ENCODE measurements at regions of chr19 and their contacts with region 1.

Region 1: DNA sequence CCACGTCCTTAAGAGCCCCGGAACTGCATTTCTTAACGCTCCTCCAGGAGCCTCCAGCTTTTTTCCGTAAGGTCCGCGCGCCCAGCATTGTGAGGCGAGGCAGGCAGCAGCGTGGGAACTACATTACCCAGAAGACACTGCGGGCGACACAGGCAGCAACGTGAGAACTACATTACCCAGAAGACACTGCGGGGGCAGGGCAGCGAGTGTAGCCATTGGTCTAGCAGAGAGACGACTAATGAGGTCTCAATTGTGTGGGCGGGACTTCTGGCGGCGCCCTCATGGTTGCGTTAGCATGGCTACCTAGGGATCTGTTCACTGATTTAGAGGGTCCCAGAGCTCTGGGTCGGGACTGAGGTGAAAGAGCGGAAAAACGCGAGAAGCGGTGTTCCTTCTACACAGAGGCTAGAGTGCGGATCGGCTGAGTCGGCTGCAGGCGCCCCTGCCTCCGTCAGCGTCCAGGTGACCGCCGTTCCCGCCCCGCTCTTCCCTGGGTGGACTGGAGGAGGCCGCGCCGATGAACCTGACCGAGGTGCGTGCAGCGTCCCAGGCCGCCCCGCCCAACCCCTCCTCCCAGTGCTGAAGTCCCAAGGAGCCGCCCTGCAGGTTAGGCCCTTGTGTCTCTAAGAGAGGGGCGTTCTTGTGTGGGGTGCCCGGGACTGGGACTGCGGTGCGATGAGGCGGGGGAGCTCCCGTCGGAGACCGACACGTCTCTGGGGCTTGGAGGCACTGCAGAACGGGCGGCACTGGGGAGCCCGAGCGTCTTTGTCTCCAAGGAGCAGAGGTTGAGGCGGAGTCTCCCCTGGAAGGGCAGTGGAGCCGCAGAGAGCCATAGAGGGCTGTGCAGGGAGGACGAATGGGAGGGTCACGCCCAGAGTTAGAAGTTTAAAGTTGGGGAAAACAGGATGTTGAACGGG is at the start of gene ZNF749:
- DNase-seq: peak; percentile 95 to 99 (median 97)
- H3K4me3 ChIP-seq: peak within 1 kb of the TSS; percentile 62 to 70
- H3K4me3 Mint-ChIP-seq: peak within 1 kb of the TSS; percentile 96 to 100 (median 98)
- H3K27ac ChIP-seq: peak within 1 kb of the TSS; percentile 66
- H3K27ac Mint-ChIP-seq: peak within 1 kb of the TSS; percentile 83 to 99 (median 97)
- H3K4me1 ChIP-seq: peaks cover 13% of the 10 kb centered on the region
- H3K4me1 Mint-ChIP-seq: peaks cover 22 to 36% (median 28%) of the 10 kb centered on the region in 4 donors
- H3K27me3 ChIP-seq: no peaks in the 10 kb centered on the region
- H3K27me3 Mint-ChIP-seq: peaks cover 0 to 2% of the 10 kb centered on the region in 2 donors
- total RNA-seq, gene ZNF749: 14.8 to 15.2 TPM

Region 2: GRCh38 chr19:57362997-57363705 is 72.2 kb before region 1 on chr19 and contains the starts of genes TRAPPC2B and ZNF547:
- CTCF ChIA-PET with region 1: no interaction called
- POLR2A ChIA-PET with region 1: no interaction called
- intact Hi-C with region 1: loop called (anchors 1 kb)
- DNase-seq: peak; percentile 97 to 99 (median 99)
- H3K4me3 ChIP-seq: peak within 1 kb of the TSS; percentile 51 to 70
- H3K4me3 Mint-ChIP-seq: peak within 1 kb of the TSS; percentile 92 to 97 (median 94)
- H3K27ac ChIP-seq: peak within 1 kb of the TSS; percentile 76
- H3K27ac Mint-ChIP-seq: peak within 1 kb of the TSS; percentile 97 to 99 (median 99)
- H3K4me1 ChIP-seq: peaks cover 12% of the 10 kb centered on the region
- H3K4me1 Mint-ChIP-seq: peaks cover 12 to 18% (median 16%) of the 10 kb centered on the region in 4 donors
- H3K27me3 ChIP-seq: no peaks in the 10 kb centered on the region
- H3K27me3 Mint-ChIP-seq: peaks cover 0 to 2% of the 10 kb centered on the region in 2 donors
- total RNA-seq, gene TRAPPC2B: 11.0 to 12.1 TPM
- total RNA-seq, gene ZNF547: 6.5 to 10.8 TPM

Region 3: GRCh38 chr19:57410877-57411671 is 24.2 kb before region 1 on chr19 and contains the start of gene ZNF17:
- CTCF ChIA-PET with region 1: interaction called, 3 read pairs
- POLR2A ChIA-PET with region 1: interaction called, 5 read pairs
- intact Hi-C with region 1: loop called (anchors 1 kb)
- DNase-seq: peak; percentile 85 to 95 (median 90)
- H3K4me3 ChIP-seq: peak within 1 kb of the TSS; percentile 49 to 90
- H3K4me3 Mint-ChIP-seq: peak within 1 kb of the TSS; percentile 92 to 97 (median 96)
- H3K27ac ChIP-seq: peak within 1 kb of the TSS; percentile 73
- H3K27ac Mint-ChIP-seq: peak within 1 kb of the TSS; percentile 79 to 95 (median 94)
- H3K4me1 ChIP-seq: peaks cover 16% of the 10 kb centered on the region
- H3K4me1 Mint-ChIP-seq: peaks cover 23 to 42% (median 29%) of the 10 kb centered on the region in 4 donors
- H3K27me3 ChIP-seq: no peaks in the 10 kb centered on the region
- H3K27me3 Mint-ChIP-seq: no peaks in the 10 kb centered on the region
- total RNA-seq, gene ZNF17: 28.3 to 29.9 TPM

Region 4: GRCh38 chr19:57515234-57515633 is 79.9 kb after region 1 on chr19:
- CTCF ChIA-PET with region 1: no interaction called
- POLR2A ChIA-PET with region 1: no interaction called
- intact Hi-C with region 1: no loop called
- DNase-seq: no peak
- H3K4me3 ChIP-seq: no peak overlapping the region
- H3K4me3 Mint-ChIP-seq: no peak overlapping the region
- H3K27ac ChIP-seq: no peak overlapping the region
- H3K27ac Mint-ChIP-seq: no peak overlapping the region
- H3K4me1 ChIP-seq: no peaks in the 10 kb centered on the region
- H3K4me1 Mint-ChIP-seq: no peaks in the 10 kb centered on the region
- H3K27me3 ChIP-seq: no peaks in the 10 kb centered on the region
- H3K27me3 Mint-ChIP-seq: no peaks in the 10 kb centered on the region

Region 5: GRCh38 chr19:57527136-57527881 is 92.0 kb after region 1 on chr19 and contains the start of gene ZNF549:
- CTCF ChIA-PET with region 1: no interaction called
- POLR2A ChIA-PET with region 1: no interaction called
- intact Hi-C with region 1: loop called (anchors 1 kb)
- DNase-seq: peak; percentile 88 to 93 (median 90)
- H3K4me3 ChIP-seq: peak within 1 kb of the TSS; percentile 15 to 99
- H3K4me3 Mint-ChIP-seq: peak within 1 kb of the TSS; percentile 86 to 98 (median 92)
- H3K27ac ChIP-seq: peak within 1 kb of the TSS; percentile 79
- H3K27ac Mint-ChIP-seq: peak within 1 kb of the TSS; percentile 86 to 97 (median 92)
- H3K4me1 ChIP-seq: peaks cover 16% of the 10 kb centered on the region
- H3K4me1 Mint-ChIP-seq: peaks cover 16 to 31% (median 22%) of the 10 kb centered on the region in 4 donors
- H3K27me3 ChIP-seq: no peaks in the 10 kb centered on the region
- H3K27me3 Mint-ChIP-seq: peaks cover 0 to 4% of the 10 kb centered on the region in 2 donors
- total RNA-seq, gene ZNF549: 20.5 to 21.8 TPM

Region 6: DNA sequence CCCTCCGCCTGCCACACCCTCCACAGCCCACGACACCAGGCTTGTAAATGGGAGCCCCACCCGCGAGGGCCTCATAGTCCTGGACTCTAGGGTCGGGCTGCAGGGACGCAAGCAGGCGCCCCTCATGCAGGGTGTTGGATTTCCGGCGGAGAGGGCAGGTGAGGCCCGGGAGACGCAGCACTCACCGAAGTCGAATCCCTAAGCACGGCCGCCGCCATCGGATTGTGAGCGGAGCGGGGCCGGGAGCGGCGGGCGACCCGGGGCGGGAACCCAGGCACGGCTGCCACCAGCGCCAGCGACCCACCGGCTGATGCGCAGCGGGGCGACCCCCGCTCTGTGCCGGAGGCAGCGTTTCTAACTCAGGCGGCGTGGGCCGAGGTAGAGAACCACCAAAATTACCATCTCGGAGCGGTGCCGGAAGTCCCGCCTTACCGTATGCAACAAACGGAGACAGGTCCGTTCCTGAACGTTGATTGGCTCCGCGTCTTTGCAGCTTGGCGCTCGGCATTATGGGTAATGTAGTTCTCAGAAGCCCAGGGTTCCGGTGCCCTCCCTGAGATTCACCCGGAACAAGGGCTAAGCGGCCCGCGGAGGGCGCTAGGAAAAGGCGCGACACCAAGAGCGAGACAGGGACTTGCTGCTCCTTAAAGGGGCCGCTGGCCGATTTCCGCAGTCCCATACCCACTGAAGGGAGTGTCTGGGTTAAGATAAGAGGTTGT is 143.3 kb after region 1 on chr19 and contains the start of gene ZNF416:
- CTCF ChIA-PET with region 1: no interaction called
- POLR2A ChIA-PET with region 1: no interaction called
- intact Hi-C with region 1: loop called (anchors 1 kb)
- DNase-seq: peak; percentile 94 to 98 (median 97)
- H3K4me3 ChIP-seq: peak within 1 kb of the TSS; percentile 53 to 73
- H3K4me3 Mint-ChIP-seq: peak within 1 kb of the TSS; percentile 84 to 88 (median 88)
- H3K27ac ChIP-seq: peak within 1 kb of the TSS; percentile 68
- H3K27ac Mint-ChIP-seq: peak within 1 kb of the TSS; percentile 78 to 92 (median 86)
- H3K4me1 ChIP-seq: peaks cover 24% of the 10 kb centered on the region
- H3K4me1 Mint-ChIP-seq: peaks cover 17 to 36% (median 20%) of the 10 kb centered on the region in 4 donors
- H3K27me3 ChIP-seq: no peaks in the 10 kb centered on the region
- H3K27me3 Mint-ChIP-seq: no peaks in the 10 kb centered on the region
- total RNA-seq, gene ZNF416: 12.0 to 13.9 TPM

Region 7: DNA sequence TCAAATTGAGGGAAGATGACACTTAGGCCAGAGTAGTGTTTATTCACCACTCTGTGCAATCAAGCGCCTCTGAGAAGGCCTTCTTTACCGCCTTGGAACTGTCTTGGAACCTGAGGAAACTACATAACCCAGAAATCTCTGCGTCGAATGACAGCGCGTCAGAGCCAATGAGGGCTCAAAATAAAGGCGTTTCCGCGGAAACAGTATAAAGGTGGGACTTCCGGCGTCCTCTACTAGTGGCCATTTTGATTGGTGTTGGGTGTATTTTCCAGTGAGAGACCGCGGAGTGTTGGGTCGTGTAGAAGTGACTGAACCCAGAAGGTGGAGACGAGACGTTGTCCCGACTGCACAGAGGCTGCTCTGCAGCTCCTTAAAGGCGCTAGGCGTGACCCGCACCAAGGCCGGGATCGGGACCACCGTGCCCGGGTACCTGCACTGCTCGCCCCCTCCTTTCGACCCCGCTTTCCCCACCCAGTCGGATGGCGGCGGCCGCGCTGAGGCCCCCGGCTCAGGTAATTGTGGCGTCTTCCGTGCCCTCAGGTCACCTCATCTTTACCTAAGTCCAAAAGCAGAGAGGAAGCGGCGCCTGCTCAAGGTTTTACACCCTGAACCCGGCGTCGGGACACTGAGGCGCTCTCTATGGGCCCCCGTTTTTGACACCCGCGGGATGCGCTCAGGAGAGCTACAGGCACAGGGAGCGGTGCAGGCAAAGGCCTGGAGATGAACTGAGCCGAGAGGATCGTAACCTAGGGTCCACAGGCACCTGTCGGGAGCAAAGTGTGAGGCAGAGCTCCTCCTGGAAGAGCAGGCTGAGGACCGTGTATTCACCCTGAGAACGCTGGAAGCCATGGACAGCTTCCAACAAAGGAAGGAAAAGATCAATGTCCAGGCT is 311.5 kb after region 1 on chr19 and contains the start of gene ZNF776:
- CTCF ChIA-PET with region 1: no interaction called
- POLR2A ChIA-PET with region 1: no interaction called
- intact Hi-C with region 1: loop called (anchors 10 kb)
- DNase-seq: peak; percentile 84 to 90 (median 87)
- H3K4me3 ChIP-seq: peak within 1 kb of the TSS; percentile 78 to 87
- H3K4me3 Mint-ChIP-seq: peak within 1 kb of the TSS; percentile 87 to 99 (median 94)
- H3K27ac ChIP-seq: peak within 1 kb of the TSS; percentile 77
- H3K27ac Mint-ChIP-seq: peak within 1 kb of the TSS; percentile 76 to 98 (median 94)
- H3K4me1 ChIP-seq: peaks cover 18% of the 10 kb centered on the region
- H3K4me1 Mint-ChIP-seq: peaks cover 13 to 37% (median 27%) of the 10 kb centered on the region in 4 donors
- H3K27me3 ChIP-seq: no peaks in the 10 kb centered on the region
- H3K27me3 Mint-ChIP-seq: no peaks in the 10 kb centered on the region
- total RNA-seq, gene ZNF776: 38.9 to 40.9 TPM